Common myeloid progenitor, CD34-positive (primary cell): ENCODE measurements at regions of chr20 and their contacts with region 1.

Region 1: GRCh38 chr20:62104791-62105345 is 17.4 kb upstream of the LSM14B start:
- DNase-seq: no peak
- H3K4me3 ChIP-seq: no peak overlapping the region
- H3K27ac ChIP-seq: no peak overlapping the region
- H3K4me1 ChIP-seq: no peaks in the 10 kb centered on the region
- H3K27me3 ChIP-seq: peaks cover 0 to 29% (median 0%) of the 10 kb centered on the region in 5 experiments

Region 2: GRCh38 chr20:61520893-61521460 is 583.9 kb before region 1 on chr20:
- CTCF ChIA-PET with region 1: no interaction called
- POLR2A ChIA-PET with region 1: no interaction called
- DNase-seq: no peak
- H3K4me3 ChIP-seq: no peak overlapping the region
- H3K27ac ChIP-seq: no peak overlapping the region
- H3K4me1 ChIP-seq: peaks cover 0 to 7% (median 0%) of the 10 kb centered on the region in 4 experiments
- H3K27me3 ChIP-seq: peaks cover 0 to 11% (median 0%) of the 10 kb centered on the region in 5 experiments

Region 3: DNA sequence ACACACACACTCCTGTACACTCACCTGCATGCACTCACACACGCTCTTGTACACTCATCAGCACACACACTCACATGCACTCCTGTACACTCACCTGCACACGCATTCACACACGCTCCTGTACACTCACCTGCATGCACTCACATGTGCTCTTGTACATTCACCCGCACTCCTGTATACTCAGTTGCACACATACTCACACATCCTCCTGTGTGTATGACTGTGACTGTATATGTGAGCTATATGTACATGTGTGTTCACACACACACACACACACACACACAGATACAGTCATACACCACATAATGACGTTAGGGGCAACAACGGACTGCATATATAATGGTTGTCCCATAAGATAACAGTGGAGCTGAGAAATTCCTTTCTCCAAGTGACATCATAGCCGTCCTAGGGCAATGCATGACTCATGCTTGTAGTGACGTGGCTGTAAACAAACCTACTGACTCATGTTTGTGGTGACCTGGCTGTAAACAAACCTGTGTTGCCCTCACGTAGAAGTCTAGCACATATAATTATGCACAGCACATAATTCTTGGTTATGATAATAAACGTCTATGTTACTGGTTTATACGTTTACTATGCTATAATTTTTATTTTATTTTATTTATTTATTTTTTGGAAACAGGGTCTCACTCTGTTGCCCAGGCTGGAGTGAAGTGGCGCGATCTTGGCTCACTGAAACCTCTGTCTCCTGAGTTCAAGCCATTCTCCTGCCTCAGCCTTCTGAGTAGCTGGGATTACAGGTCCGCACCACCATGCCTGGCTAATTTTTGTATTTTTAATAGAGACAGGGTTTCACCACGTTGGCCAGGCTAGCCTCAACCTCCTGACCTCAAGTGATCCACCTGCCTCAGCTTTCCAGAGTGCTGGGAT is 16.4 kb before region 1 on chr20:
- CTCF ChIA-PET with region 1: interaction called, 11 read pairs
- POLR2A ChIA-PET with region 1: no interaction called
- DNase-seq: peak; percentile 48 to 70 (median 58)
- H3K4me3 ChIP-seq: no peak overlapping the region
- H3K27ac ChIP-seq: no peak overlapping the region
- H3K4me1 ChIP-seq: no peaks in the 10 kb centered on the region
- H3K27me3 ChIP-seq: peaks cover 0 to 13% (median 2%) of the 10 kb centered on the region in 5 experiments

Region 4: DNA sequence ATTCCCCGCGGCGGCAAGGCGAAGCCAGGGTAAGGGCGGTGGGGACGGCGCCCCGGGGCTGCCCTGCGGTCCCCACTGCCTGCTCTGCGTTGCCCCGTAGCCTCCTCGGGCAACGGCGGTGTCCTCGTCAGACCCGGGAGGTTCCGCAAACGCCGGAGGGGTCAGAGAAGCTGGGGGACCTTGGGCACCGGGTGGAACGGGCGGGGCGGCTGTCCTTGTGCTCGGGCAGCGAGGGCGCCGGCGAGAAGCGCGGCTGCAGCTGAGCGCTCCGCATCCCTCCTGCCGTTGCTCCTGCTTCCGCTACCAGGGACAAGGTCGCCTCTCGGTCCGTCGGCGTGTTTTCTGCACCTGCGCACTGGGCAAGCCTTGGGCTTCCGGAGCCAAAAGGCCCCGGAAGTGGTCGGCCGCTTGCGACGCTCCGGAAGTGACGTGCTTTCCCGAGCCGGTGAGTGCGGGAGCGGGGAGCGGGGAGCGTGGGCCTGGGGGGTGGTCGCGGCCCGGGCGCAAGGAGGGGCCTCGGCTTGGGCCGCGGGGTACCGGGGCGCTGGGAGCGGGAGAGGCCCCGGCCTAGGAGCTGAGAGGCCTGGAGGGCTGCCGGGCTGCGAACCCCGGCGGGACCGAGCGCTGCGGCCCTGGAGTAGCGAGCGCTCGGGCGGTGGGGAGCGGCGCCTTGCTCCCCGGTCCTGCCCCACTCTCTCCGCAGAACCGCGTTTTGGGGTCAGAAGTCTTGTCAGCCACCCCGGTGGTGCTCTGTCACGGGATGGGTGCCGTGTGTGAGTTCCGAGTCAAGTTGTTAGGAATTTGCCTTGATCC is 78.0 kb after region 1 on chr20 and contains the start of gene MTG2:
- CTCF ChIA-PET with region 1: no interaction called
- POLR2A ChIA-PET with region 1: no interaction called
- DNase-seq: peak; percentile 95 to 97 (median 97)
- H3K4me3 ChIP-seq: peak within 1 kb of the TSS; percentile 72 to 99 (median 87)
- H3K27ac ChIP-seq: peak within 1 kb of the TSS; percentile 97 to 99
- H3K4me1 ChIP-seq: peaks cover 9 to 22% (median 15%) of the 10 kb centered on the region in 4 experiments
- H3K27me3 ChIP-seq: no peaks in the 10 kb centered on the region